WTC11 (cell line): ENCODE measurements at regions of chr12 and their contacts with region 1.

Region 1: GRCh38 chr12:67355578-67356379 is 86.6 kb downstream of the CAND1 start:
- DNase-seq: no peak
- ATAC-seq: peak; percentile 66
- H3K4me3 Mint-ChIP-seq: no peak overlapping the region
- H3K27ac Mint-ChIP-seq: no peak overlapping the region
- H3K4me1 Mint-ChIP-seq: peaks cover 22% of the 10 kb centered on the region
- H3K27me3 Mint-ChIP-seq: no peaks in the 10 kb centered on the region
- CTCF ChIP-seq: 0 out of 2 replicates have a peak, but pooled peaks have one; percentile 16

Region 2: DNA sequence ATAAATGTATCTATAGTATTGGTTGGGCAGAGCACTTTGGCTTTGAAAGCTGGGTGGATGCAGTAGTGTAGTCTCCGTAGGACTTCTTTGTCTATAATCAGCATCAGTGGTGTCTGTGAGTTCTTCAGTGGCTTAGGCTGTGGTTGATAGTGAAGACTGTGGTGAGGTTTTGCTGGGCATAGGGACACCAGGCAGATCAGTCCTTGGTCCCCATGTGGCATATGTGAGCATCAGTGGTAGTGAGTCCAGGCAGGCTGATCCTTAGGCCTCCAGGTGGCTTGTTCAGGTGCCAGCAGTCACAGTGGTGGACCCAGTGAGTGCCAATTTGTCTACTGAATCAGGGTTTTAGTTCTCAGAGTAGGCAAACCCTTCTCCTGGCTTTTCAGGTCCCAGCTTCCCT is 16.2 kb before region 1 on chr12:
- CTCF ChIA-PET with region 1: no interaction called
- POLR2A ChIA-PET with region 1: no interaction called
- DNase-seq: no peak
- ATAC-seq: no peak
- H3K4me3 Mint-ChIP-seq: no peak overlapping the region
- H3K27ac Mint-ChIP-seq: no peak overlapping the region
- H3K4me1 Mint-ChIP-seq: no peaks in the 10 kb centered on the region
- H3K27me3 Mint-ChIP-seq: no peaks in the 10 kb centered on the region; the same call in 1 of the 2 replicates
- CTCF ChIP-seq: no peak

Region 3: GRCh38 chr12:67413578-67413977 is 57.8 kb after region 1 on chr12:
- CTCF ChIA-PET with region 1: interaction called, 84 read pairs
- POLR2A ChIA-PET with region 1: no interaction called
- DNase-seq: no peak
- ATAC-seq: no peak; the same call in 1 of the 2 replicates
- H3K4me3 Mint-ChIP-seq: no peak overlapping the region
- H3K27ac Mint-ChIP-seq: no peak overlapping the region
- H3K4me1 Mint-ChIP-seq: peaks cover 22% of the 10 kb centered on the region
- H3K27me3 Mint-ChIP-seq: no peaks in the 10 kb centered on the region; the same call in 1 of the 2 replicates
- CTCF ChIP-seq: no peak

Region 4: GRCh38 chr12:67430708-67431335 is 75.0 kb after region 1 on chr12:
- CTCF ChIA-PET with region 1: interaction called, 24 read pairs
- POLR2A ChIA-PET with region 1: no interaction called
- DNase-seq: peak; percentile 20
- ATAC-seq: peak; percentile 67
- H3K4me3 Mint-ChIP-seq: no peak overlapping the region
- H3K27ac Mint-ChIP-seq: no peak overlapping the region
- H3K4me1 Mint-ChIP-seq: peaks cover 19% of the 10 kb centered on the region
- H3K27me3 Mint-ChIP-seq: no peaks in the 10 kb centered on the region
- CTCF ChIP-seq: no peak

Region 5: GRCh38 chr12:67573566-67573965 is 217.8 kb after region 1 on chr12:
- CTCF ChIA-PET with region 1: no interaction called
- POLR2A ChIA-PET with region 1: no interaction called
- DNase-seq: no peak
- ATAC-seq: no peak
- H3K4me3 Mint-ChIP-seq: no peak overlapping the region
- H3K27ac Mint-ChIP-seq: no peak overlapping the region
- H3K4me1 Mint-ChIP-seq: peaks cover 10% of the 10 kb centered on the region
- H3K27me3 Mint-ChIP-seq: no peaks in the 10 kb centered on the region
- CTCF ChIP-seq: no peak

Region 6: DNA sequence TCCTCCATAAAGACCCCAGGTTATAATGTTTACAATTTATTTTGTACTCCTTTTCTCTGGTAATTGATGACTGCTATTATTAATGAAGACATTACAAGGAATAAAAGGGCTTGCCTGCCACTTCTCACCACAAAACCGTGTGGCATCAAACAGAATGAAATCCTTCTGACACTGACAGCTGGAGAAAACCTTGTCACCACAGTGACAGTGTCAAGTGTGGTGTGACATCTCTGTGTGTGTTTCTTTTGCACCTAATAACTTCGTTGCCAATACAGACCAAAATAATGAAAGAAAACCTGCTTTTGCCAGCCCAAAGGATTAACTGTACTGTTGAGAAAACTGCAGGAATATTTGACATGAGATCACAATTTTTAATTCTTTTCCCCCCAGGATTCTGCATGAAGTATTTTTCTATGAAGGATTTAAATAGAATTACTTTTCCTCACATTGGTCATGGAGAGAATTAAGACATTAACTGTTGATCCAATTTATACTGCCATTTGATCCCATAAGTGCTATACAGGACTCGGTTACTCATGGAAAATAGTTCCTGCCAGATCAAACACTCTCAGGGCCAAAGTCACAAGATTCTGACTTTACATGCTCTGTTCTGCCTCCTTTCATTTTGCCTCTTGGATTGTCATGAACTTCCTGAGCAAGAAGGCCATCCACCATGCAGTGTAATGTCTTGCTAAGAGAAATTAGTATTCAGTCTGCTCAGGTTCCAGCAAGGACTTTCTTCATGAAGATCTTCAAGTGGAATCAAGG is 573.0 kb after region 1 on chr12:
- CTCF ChIA-PET with region 1: interaction called, 11 read pairs
- POLR2A ChIA-PET with region 1: no interaction called
- DNase-seq: no peak
- ATAC-seq: no peak
- H3K4me3 Mint-ChIP-seq: no peak overlapping the region
- H3K27ac Mint-ChIP-seq: no peak overlapping the region
- H3K4me1 Mint-ChIP-seq: no peaks in the 10 kb centered on the region
- H3K27me3 Mint-ChIP-seq: no peaks in the 10 kb centered on the region; the same call in 1 of the 2 replicates
- CTCF ChIP-seq: no peak